ENCODE measurements at regions of chr4 and their contacts with region 1.

Region 1: GRCh38 chr4:26978387-26979053 is 117.9 kb downstream of the STIM2 start:
- DNase-seq: no peak
- H3K4me3 Mint-ChIP-seq: no peak overlapping the region
- H3K27ac Mint-ChIP-seq: no peak overlapping the region
- H3K4me1 Mint-ChIP-seq: peaks cover 53% of the 10 kb centered on the region
- H3K27me3 Mint-ChIP-seq: no peaks in the 10 kb centered on the region

Region 2: GRCh38 chr4:26916195-26916594 is 62.3 kb before region 1 on chr4:
- CTCF ChIA-PET with region 1: no interaction called
- intact Hi-C with region 1: no loop called
- DNase-seq: no peak
- H3K4me3 Mint-ChIP-seq: no peak overlapping the region
- H3K27ac Mint-ChIP-seq: no peak overlapping the region
- H3K4me1 Mint-ChIP-seq: peaks cover 51% of the 10 kb centered on the region
- H3K27me3 Mint-ChIP-seq: no peaks in the 10 kb centered on the region

Region 3: DNA sequence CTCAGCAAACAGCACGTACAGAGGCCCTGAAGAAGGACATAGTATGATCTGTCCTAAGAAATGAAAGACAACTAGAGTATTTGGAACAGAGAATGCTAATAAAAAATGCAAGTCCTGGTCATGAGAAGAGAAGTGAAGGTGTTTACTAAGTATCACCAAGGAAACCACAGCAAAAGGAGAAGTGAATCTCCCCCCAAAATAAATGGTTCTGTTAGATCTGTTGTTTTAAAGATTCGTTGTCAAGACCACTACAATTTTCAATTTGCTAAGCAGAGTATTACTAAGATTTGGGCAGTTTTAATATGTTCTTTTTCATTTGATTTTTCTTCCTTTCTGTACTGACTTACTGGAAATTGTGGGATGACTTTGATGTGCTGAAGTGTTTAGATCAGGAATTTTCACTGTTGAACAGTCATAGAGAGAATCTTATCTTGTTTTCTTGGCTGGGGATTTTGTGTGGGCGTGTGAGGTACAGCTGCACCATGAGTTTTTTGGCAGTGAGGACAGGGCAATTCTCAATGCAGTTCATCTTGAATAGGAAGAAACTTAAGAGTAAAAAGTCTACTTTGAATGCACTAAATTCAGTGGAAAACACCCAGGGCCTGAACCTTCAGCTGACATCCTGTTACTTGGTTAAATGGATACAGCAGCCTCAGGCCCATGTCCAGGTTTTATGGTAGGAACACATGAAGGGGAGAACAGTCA is 14.3 kb after region 1 on chr4:
- CTCF ChIA-PET with region 1: interaction called, 3 read pairs
- intact Hi-C with region 1: loop called (anchors 1 kb)
- DNase-seq: peak; percentile 47
- H3K4me3 Mint-ChIP-seq: no peak overlapping the region
- H3K27ac Mint-ChIP-seq: no peak overlapping the region
- H3K4me1 Mint-ChIP-seq: peaks cover 26% of the 10 kb centered on the region
- H3K27me3 Mint-ChIP-seq: no peaks in the 10 kb centered on the region

Region 4: GRCh38 chr4:27024805-27025204 is 46.3 kb after region 1 on chr4:
- CTCF ChIA-PET with region 1: no interaction called
- intact Hi-C with region 1: no loop called
- DNase-seq: no peak
- H3K4me3 Mint-ChIP-seq: no peak overlapping the region
- H3K27ac Mint-ChIP-seq: no peak overlapping the region
- H3K4me1 Mint-ChIP-seq: peaks cover 10% of the 10 kb centered on the region
- H3K27me3 Mint-ChIP-seq: no peaks in the 10 kb centered on the region

Measured in activated naive CD4-positive, alpha-beta T cell treated with anti-CD3 and anti-CD28 coated beads for 36 hours (primary cell).